ENCODE measurements at regions of chrX and their contacts with region 1.

Region 1: DNA sequence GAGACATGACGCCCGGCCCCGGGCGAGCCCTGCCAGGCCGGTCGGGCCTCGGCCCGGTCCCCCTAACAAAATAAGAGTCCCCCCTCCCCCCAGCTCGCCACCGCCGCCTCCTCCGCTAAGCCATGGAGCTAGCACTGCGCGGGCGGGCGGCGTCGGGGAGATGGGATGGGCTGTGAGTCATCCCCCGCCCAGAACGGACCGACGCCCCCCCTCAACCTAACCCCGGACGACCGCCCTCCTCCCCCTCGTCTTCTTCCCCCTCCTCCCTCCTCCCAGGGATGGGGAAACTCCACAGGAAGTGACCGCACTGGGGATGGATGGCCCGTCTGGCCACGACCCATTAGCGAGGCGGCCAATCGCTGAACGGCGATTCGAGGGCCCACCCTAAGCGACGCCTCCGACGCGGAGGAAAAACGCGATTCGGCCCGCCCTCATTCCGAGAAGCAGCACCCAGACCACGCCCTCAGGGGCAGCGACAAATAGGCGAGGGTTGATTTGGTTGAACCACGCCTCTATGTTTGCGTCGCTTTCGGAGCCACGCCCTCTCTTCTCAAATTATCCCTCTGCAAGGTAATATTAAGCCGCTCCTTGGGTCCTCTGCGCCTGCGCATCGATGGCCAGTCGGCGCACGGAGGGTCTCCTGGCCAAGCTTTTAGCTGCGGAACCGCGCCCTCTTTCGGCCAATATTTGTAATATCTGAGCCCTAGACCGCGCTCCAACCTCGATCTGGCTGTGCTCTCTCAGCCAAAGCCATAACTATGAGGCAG is at the start of gene TFE3:
- DNase-seq: peak; percentile 97
- H3K4me3 Mint-ChIP-seq: peak within 1 kb of the TSS; percentile 91
- H3K27ac Mint-ChIP-seq: peak within 1 kb of the TSS; percentile 92
- H3K4me1 Mint-ChIP-seq: peaks cover 30% of the 10 kb centered on the region
- H3K27me3 Mint-ChIP-seq: no peaks in the 10 kb centered on the region
- total RNA-seq, gene TFE3: 29.0 to 29.1 TPM

Region 2: DNA sequence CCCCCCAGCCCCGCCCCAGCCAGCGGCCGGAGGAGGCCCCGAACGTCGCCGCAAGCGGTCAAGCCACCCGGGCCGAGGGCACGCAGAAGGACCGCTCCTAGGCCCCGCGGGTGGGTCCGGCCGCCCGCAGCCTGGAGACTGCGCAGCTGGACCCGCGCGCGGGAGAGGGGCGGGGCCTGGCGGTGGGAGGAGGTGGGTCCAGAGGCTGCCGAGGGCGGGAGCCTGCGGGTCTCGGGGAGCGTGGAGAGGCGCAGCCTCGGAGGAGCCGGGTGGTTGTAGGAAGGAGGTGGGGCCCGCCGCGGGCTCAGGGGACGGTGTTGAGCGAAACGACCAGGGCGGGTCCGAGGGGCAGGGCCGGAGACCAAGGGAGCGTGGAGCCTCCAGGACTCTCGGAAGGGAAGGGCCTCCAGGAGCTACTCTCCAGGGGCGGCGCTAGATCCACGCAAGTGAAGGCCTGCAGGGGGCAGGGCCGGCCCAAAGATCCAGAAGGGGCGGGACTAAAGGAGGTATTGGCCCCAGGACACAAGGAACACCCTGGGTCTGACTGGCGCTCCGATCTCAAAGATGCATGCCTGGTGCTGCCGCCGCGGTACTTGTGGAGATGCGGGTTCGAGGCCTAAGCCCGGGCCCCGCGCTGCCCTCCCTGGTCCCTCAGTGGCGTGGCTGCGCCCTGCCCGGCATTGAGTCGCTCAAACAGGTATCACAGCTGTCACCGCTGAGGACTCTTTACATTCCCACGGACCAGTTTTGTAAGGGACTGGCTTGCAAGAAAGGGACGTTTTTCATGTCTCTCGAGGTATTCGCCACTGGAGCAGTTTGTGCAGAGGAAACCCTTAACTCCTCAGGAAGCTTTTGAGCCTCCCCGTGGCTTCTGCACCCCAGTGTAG is 151.8 kb before region 1 on chrX:
- CTCF ChIA-PET with region 1: interaction called, 5 read pairs
- POLR2A ChIA-PET with region 1: no interaction called
- intact Hi-C with region 1: loop called (anchors 1 kb)
- DNase-seq: peak; percentile 88
- H3K4me3 Mint-ChIP-seq: peak overlapping the region; percentile 77
- H3K27ac Mint-ChIP-seq: peak overlapping the region; percentile 65
- H3K4me1 Mint-ChIP-seq: peaks cover 22% of the 10 kb centered on the region
- H3K27me3 Mint-ChIP-seq: no peaks in the 10 kb centered on the region

Region 3: DNA sequence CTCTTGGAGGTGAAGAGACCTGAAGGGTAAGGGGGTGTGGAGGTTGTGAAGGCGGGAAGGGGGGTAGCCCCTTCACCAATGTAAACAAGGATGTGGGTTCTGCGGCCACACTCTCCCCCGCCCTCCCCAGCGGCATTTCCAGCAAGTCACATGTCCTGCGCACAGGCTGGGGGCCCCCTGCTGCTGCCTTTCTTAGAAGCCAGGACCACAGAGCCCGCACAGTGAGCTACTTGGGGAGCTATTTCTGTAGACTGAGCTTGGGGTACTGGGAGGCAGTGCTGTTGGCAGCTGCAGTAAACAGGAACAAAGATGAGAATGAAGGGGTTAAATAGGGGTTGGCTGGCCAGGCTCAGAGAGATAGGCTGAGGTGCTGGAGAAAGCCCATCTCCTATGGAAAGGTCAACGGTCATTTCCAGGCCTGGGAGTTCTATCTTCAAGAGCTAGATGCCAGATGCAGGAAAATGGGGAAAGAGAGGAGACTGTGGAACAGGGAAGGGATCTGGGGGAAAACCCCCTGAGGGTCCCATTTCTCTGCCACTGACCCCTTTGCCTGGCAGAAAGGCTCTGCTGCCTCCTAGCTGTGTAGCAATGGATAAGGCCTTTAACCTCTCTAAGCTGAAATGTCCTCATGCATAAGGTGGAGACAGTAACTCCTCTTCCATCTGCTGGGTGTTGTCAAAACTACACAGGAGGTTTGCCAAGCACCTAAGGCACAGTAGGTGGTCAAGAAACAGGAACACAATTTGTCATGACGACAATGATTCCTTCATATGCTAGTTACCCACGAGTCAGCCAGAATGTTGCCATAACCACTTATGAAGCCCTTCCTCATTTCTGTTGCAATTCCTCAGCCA is 106.1 kb before region 1 on chrX:
- CTCF ChIA-PET with region 1: interaction called, 3 read pairs
- POLR2A ChIA-PET with region 1: no interaction called
- intact Hi-C with region 1: loop called (anchors 2 kb)
- DNase-seq: peak; percentile 95
- H3K4me3 Mint-ChIP-seq: peak overlapping the region; percentile 75
- H3K27ac Mint-ChIP-seq: peak overlapping the region; percentile 97
- H3K4me1 Mint-ChIP-seq: peaks cover 79% of the 10 kb centered on the region
- H3K27me3 Mint-ChIP-seq: no peaks in the 10 kb centered on the region

Region 4: DNA sequence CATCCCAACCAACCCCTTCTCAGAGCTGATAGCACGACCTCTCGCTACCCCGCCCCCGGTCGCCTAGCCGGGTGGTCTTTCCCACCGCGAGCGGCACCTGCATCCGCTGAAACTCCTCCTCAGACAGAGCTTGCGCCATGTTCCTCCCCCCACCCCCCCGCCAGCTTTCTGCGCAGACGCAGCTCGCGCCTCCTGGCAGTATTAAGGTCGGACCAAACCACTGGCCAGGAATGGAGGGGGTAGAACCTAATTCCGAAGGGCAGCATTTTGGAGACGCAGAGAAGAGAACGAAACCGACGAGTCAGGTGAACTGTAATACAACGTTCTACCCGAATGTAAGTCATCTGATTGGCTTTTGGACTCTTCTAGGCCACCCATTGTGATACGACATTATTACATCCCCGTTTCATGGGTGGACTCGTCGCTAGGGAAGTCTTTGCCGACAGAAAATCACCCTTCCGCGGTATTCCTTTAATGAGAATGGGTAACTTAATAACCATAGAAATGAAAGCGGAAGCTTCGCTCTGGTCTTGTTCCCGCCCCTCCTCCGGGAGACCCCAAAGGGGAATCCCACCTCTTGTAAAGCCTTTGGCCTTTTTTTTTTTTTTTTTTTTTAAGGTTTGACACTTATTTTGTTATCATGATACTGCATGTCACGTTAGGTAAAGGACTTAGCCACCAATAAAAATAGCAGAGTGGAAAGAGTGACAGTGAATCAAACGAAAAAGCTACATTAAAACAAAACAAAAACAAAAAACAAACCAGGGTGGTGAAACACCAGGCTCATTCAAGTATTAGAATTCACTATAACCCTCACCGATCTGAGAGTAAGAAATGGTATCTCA is 41.1 kb before region 1 on chrX and contains the start of gene GRIPAP1:
- CTCF ChIA-PET with region 1: interaction called, 3 read pairs
- POLR2A ChIA-PET with region 1: interaction called, 11 read pairs
- intact Hi-C with region 1: loop called (anchors 1 kb)
- DNase-seq: peak; percentile 85
- H3K4me3 Mint-ChIP-seq: peak within 1 kb of the TSS; percentile 99
- H3K27ac Mint-ChIP-seq: peak within 1 kb of the TSS; percentile 98
- H3K4me1 Mint-ChIP-seq: peaks cover 35% of the 10 kb centered on the region
- H3K27me3 Mint-ChIP-seq: no peaks in the 10 kb centered on the region
- total RNA-seq, gene GRIPAP1: 76.1 to 78.4 TPM

Region 5: DNA sequence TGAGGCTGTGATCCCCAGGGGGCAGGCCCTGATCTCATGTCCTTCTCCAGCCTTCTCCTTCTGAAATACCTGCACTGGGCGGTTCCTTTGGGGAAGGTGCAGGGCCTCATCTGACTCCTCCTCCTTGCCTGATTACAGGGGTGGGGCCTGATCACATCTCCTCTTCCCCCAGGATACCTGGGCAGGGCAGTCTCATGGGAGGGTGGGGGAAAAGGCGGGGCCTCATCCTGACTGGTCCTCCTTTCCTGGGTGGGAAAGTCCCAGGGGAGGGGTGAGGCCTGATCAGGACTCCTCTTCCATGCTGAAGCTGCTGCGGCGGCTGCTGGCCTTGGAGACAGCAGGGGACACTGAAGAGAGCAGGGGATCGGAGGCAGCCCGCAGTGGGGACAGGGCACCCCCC is 13.5 kb before region 1 on chrX:
- CTCF ChIA-PET with region 1: no interaction called
- POLR2A ChIA-PET with region 1: no interaction called
- intact Hi-C with region 1: no loop called
- DNase-seq: no peak
- H3K4me3 Mint-ChIP-seq: no peak overlapping the region
- H3K27ac Mint-ChIP-seq: no peak overlapping the region
- H3K4me1 Mint-ChIP-seq: no peaks in the 10 kb centered on the region
- H3K27me3 Mint-ChIP-seq: no peaks in the 10 kb centered on the region

Measured in activated CD4-positive, alpha-beta memory T cell treated with anti-CD3 and anti-CD28 coated beads for 36 hours (primary cell).